ENCODE measurements at regions of chr3 and their contacts with region 1.

Region 1: GRCh38 chr3:136075218-136075808 is 109.8 kb downstream of the PPP2R3A start:
- DNase-seq: peak; percentile 81
- ATAC-seq: peak; percentile 64
- H3K4me3 ChIP-seq: no peak overlapping the region
- H3K4me3 Mint-ChIP-seq: no peak overlapping the region
- H3K27ac ChIP-seq: no peak overlapping the region
- H3K27ac Mint-ChIP-seq: no peak overlapping the region
- H3K4me1 ChIP-seq: no peaks in the 10 kb centered on the region
- H3K4me1 Mint-ChIP-seq: no peaks in the 10 kb centered on the region
- H3K27me3 ChIP-seq: no peaks in the 10 kb centered on the region
- H3K27me3 Mint-ChIP-seq: peaks cover 4% of the 10 kb centered on the region
- CTCF ChIP-seq: peak; percentile 99

Region 2: DNA sequence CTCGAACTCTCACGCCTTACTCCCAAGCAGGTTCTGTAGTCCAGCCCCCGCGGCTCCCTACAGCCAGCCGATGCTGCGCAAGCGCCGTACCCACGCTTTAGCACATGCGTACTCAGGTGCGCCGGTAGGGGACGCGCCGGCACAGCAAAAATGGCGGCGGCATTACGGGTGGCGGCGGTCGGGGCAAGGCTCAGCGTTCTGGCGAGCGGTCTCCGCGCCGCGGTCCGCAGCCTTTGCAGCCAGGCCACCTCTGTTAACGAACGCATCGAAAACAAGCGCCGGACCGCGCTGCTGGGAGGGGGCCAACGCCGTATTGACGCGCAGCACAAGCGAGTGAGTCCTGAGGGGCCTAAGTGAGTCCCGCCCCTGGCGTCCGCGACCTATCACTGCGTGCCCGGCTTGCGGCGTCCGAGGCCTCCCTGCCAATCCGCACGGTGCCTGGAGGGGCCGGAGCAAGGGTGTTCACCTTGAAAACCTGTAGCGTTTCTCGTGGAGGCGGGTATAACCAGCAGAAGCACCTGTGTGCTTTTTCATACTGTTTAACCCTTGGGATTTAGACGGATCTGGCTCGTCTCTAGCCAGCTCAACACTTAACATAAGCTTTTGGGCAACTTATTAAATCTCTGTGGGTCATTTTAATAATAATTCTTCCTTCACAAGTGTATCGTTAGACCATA is 175.1 kb after region 1 on chr3 and contains the start of gene PCCB:
- CTCF ChIA-PET with region 1: interaction called, 5 read pairs
- POLR2A ChIA-PET with region 1: no interaction called
- intact Hi-C with region 1: loop called (anchors 1 kb)
- DNase-seq: peak; percentile 98
- ATAC-seq: peak; percentile 96
- H3K4me3 ChIP-seq: peak within 1 kb of the TSS; percentile 59 to 76 (median 73)
- H3K4me3 Mint-ChIP-seq: peak within 1 kb of the TSS; percentile 92
- H3K27ac ChIP-seq: peak within 1 kb of the TSS; percentile 72 to 83
- H3K27ac Mint-ChIP-seq: peak within 1 kb of the TSS; percentile 92
- H3K4me1 ChIP-seq: peaks cover 10 to 17% of the 10 kb centered on the region in 2 donors
- H3K4me1 Mint-ChIP-seq: peaks cover 20% of the 10 kb centered on the region
- H3K27me3 ChIP-seq: no peaks in the 10 kb centered on the region
- H3K27me3 Mint-ChIP-seq: no peaks in the 10 kb centered on the region
- CTCF ChIP-seq: peak; percentile 82
- total RNA-seq, gene PCCB: 12.5 and 15.5 TPM in 2 replicates

Region 3: GRCh38 chr3:136366289-136366688 is 291.0 kb after region 1 on chr3:
- CTCF ChIA-PET with region 1: no interaction called
- POLR2A ChIA-PET with region 1: interaction called, 11 read pairs
- intact Hi-C with region 1: no loop called
- DNase-seq: no peak
- ATAC-seq: no peak
- H3K4me3 ChIP-seq: no peak overlapping the region
- H3K4me3 Mint-ChIP-seq: no peak overlapping the region
- H3K27ac ChIP-seq: no peak overlapping the region
- H3K27ac Mint-ChIP-seq: no peak overlapping the region
- H3K4me1 ChIP-seq: no peaks in the 10 kb centered on the region
- H3K4me1 Mint-ChIP-seq: no peaks in the 10 kb centered on the region
- H3K27me3 ChIP-seq: no peaks in the 10 kb centered on the region
- H3K27me3 Mint-ChIP-seq: no peaks in the 10 kb centered on the region
- CTCF ChIP-seq: no peak

Region 4: DNA sequence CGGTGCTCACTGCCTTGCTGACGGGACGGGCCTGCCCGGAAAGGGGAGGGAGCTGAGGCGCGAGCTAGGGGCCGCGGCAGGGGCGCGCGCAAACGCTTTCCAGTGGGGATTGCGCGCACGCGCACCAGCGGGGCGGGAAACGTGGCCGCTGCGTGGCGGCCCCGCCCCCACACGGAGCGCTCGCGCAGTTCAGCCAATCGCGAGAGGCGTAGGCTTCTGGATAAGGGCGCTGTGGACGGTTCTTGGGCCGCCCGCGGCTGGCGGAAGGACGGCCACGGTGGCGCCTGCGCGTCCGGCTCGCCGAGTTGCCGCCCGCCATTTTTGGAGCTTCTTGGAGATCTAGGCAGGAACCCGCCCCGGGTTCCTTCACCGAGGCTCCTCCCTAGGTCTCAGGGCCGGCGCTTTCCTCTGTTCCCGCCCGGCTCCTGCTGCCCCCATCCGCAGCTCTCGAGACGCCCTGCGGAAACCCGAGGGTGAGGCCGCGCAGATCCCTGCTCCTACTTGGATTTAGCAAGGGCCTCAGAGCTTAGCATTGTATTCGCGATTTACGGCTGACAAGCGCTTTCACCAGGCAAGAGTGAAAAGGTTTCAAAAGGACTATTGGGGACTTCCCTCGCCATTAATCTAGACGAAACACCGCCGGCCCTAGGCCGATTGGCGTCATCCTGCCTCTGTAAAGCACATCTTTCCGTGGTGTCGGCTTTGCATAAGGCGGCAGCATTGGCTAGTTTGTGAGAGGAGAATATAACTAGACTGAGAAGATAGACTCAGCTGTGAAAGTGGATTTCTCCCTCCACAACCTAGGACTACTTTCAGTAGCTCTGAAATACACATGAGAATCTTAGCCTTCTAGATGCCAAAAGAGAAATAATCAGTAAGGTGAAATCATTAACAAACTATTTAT is 677.4 kb after region 1 on chr3:
- CTCF ChIA-PET with region 1: interaction called, 62 read pairs
- POLR2A ChIA-PET with region 1: no interaction called
- intact Hi-C with region 1: loop called (anchors 1 kb)
- DNase-seq: peak; percentile 100
- ATAC-seq: peak; percentile 83
- H3K4me3 ChIP-seq: peak overlapping the region; percentile 88 to 98 (median 93)
- H3K4me3 Mint-ChIP-seq: peak overlapping the region; percentile 90
- H3K27ac ChIP-seq: peak overlapping the region; percentile 99 to 100
- H3K27ac Mint-ChIP-seq: peak overlapping the region; percentile 97
- H3K4me1 ChIP-seq: peaks cover 25 to 30% of the 10 kb centered on the region in 2 donors
- H3K4me1 Mint-ChIP-seq: peaks cover 42% of the 10 kb centered on the region
- H3K27me3 ChIP-seq: no peaks in the 10 kb centered on the region
- H3K27me3 Mint-ChIP-seq: no peaks in the 10 kb centered on the region
- CTCF ChIP-seq: peak; percentile 23

Region 5: DNA sequence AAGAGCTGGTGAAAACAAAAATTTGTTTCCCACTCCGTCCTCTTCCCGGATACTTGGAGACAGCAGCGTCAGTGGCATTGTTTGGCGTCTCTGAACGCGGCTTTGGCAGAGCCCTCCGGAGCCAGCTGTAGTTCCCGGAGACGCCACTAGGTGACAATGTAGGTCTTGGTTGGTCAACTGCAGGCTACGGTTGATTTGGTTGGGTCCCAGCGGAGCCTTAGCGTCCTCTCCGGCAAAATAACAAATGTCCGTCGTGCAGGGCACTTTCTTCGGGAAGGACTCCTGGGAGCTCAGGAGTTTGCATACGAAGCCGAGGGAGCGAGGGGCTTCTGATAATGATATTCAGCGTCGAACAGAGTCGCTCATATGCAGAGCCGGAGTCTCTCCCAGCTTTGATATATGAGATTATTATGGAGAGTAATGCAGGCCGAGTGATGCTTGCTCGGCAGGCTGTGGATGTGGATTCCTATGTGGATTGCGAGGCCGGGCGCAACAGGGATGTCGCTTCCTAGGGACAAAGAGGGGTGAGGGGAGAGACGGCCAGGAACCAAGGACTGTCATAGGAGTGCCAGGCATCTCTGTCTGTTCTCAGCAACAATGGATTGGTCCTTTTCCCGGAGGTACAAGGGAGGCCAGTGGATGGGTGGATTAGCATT is 957.3 kb after region 1 on chr3:
- CTCF ChIA-PET with region 1: interaction called, 3 read pairs
- POLR2A ChIA-PET with region 1: no interaction called
- intact Hi-C with region 1: loop called (anchors 5 kb)
- DNase-seq: peak; percentile 65
- ATAC-seq: peak; percentile 85
- H3K4me3 ChIP-seq: peak overlapping the region in 3 of 5 experiments; percentile 11 to 49 (median 34)
- H3K4me3 Mint-ChIP-seq: peak overlapping the region; percentile 70
- H3K27ac ChIP-seq: no peak overlapping the region
- H3K27ac Mint-ChIP-seq: no peak overlapping the region
- H3K4me1 ChIP-seq: peaks cover 7 to 10% of the 10 kb centered on the region in 2 donors
- H3K4me1 Mint-ChIP-seq: peaks cover 9% of the 10 kb centered on the region
- H3K27me3 ChIP-seq: peaks cover 0 to 25% (median 8%) of the 10 kb centered on the region in 4 experiments
- H3K27me3 Mint-ChIP-seq: peaks cover 31% of the 10 kb centered on the region
- CTCF ChIP-seq: peak; percentile 98